ENCODE measurements at regions of chr1 and their contacts with region 1.

Region 1: GRCh38 chr1:89065079-89065868 is at the start of gene GBP1:
- DNase-seq: peak; percentile 84
- H3K4me3 ChIP-seq: peak within 1 kb of the TSS; percentile 39 to 77 (median 54)
- H3K27ac ChIP-seq: peak within 1 kb of the TSS; percentile 16
- H3K4me1 ChIP-seq: peaks cover 9% of the 10 kb centered on the region
- H3K27me3 ChIP-seq: no peaks in the 10 kb centered on the region
- CTCF ChIP-seq: no peak
- POLR2A ChIP-seq: no peak
- total RNA-seq, gene GBP1: 17.8 and 28.0 TPM in 2 replicates

Region 2: GRCh38 chr1:89022167-89022959 is 42.9 kb before region 1 on chr1 and contains the start of gene GBP3:
- CTCF ChIA-PET with region 1: interaction called, 10 read pairs
- POLR2A ChIA-PET with region 1: no interaction called
- dilution Hi-C with region 1: no loop called
- intact Hi-C with region 1: loop called (anchors 2 kb)
- DNase-seq: peak; percentile 76
- H3K4me3 ChIP-seq: peak within 1 kb of the TSS; percentile 59 to 97 (median 87)
- H3K27ac ChIP-seq: peak within 1 kb of the TSS; percentile 74
- H3K4me1 ChIP-seq: peaks cover 11% of the 10 kb centered on the region
- H3K27me3 ChIP-seq: no peaks in the 10 kb centered on the region
- CTCF ChIP-seq: no peak
- POLR2A ChIP-seq: no peak
- total RNA-seq, gene GBP3: 7.3 and 12.7 TPM in 2 replicates

Region 3: DNA sequence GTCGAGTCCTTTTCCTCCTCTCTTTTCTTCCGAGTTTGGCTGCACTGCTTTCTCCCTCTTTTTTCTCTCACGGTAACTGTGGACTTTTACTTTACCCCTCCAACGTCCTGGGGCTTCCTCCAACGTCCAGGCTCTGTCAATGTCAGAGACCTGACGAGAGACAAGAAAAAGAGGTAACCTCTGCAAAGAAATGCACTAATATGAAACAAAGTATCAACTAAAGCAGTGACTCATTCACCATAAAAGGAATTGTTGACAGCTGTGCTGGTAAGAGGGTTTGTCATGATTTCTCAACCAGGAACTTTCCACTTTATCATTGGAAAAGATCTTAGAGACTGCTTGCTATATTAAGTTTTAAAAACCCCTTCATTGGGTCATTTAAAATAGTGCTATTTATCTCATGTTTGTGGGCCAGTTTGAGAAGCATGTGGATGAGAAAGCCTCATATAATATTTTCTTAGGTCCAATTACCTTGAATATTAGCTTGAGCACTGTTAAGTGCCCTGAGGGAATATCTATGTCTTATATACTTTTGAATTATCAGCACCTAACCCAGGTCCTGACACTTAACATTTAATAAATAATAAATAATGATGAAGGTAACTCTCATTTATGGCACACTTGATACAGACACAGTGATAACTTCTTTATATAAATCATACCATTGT is 60.8 kb after region 1 on chr1 and contains the start of gene GBP2:
- CTCF ChIA-PET with region 1: no interaction called
- POLR2A ChIA-PET with region 1: no interaction called
- dilution Hi-C with region 1: no loop called
- intact Hi-C with region 1: loop called (anchors 2 kb)
- DNase-seq: peak; percentile 85
- H3K4me3 ChIP-seq: peak within 1 kb of the TSS; percentile 46 to 92 (median 89)
- H3K27ac ChIP-seq: peak within 1 kb of the TSS; percentile 65
- H3K4me1 ChIP-seq: peaks cover 30% of the 10 kb centered on the region
- H3K27me3 ChIP-seq: no peaks in the 10 kb centered on the region
- CTCF ChIP-seq: no peak
- POLR2A ChIP-seq: no peak
- total RNA-seq, gene GBP2: 19.4 and 30.2 TPM in 2 replicates

Region 4: GRCh38 chr1:89171067-89171438 is 105.8 kb after region 1 on chr1:
- CTCF ChIA-PET with region 1: no interaction called
- POLR2A ChIA-PET with region 1: no interaction called
- dilution Hi-C with region 1: no loop called
- intact Hi-C with region 1: no loop called
- DNase-seq: no peak
- H3K4me3 ChIP-seq: no peak overlapping the region
- H3K27ac ChIP-seq: no peak overlapping the region
- H3K4me1 ChIP-seq: no peaks in the 10 kb centered on the region
- H3K27me3 ChIP-seq: no peaks in the 10 kb centered on the region
- CTCF ChIP-seq: no peak
- POLR2A ChIP-seq: no peak

Measured in endothelial cell of umbilical vein (primary cell).